ENCODE measurements at regions of chr20 and their contacts with region 1.

Region 1: GRCh38 chr20:41693136-41693979 is 75.2 kb upstream of the CHD6 start:
- DNase-seq: peak; percentile 69
- ATAC-seq: peak; percentile 89
- H3K4me3 Mint-ChIP-seq: peak overlapping the region; percentile 87
- H3K27ac Mint-ChIP-seq: peak overlapping the region; percentile 92
- H3K4me1 Mint-ChIP-seq: peaks cover 13% of the 10 kb centered on the region
- H3K27me3 Mint-ChIP-seq: no peaks in the 10 kb centered on the region

Region 2: DNA sequence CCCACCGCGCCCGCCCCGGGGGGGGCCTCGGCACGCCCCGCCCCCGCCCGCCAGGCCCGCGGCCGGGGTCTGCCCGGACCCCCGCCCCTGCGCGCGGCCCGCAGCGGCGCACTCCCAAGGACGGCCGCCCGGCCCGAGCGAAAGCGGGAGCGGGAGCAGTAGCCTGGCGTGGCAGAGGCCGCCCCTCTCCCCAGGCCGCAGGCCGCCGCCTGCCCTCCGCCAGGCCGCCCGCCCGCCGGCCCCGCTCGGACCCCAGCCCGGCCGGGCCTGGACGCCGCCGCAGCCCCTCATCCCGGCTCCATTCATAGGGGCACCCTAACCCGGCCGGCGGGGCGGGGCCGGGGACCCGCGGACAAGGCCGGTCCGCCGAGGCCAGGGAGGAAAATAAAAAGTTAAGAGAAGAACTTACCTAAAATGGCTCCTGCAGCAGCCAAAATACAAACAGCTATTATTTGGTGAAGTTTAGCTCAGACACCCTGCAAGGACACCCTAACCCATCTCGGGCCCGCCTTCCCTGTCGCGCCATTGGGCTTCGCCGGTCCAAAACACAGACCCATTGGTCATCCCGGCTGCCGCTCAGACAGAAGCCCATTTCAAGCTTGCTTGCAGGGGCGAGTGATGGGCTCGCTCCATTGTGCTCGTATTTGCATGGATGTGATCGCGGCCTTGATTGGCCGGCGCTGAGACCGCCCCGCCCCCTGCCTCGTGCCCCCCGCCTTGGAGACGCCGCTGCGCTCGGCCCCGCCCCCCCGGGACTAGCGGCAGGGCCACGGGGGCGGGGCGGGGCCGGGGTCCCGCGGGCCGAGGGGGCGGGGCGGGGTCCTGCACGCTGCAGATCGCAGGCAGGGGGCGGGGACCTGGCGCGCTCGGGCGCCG is 75.2 kb before region 1 on chr20 and contains the start of gene CHD6:
- POLR2A ChIA-PET with region 1: interaction called, 16 read pairs
- DNase-seq: peak; percentile 98
- ATAC-seq: peak; percentile 99
- H3K4me3 Mint-ChIP-seq: peak within 1 kb of the TSS; percentile 94
- H3K27ac Mint-ChIP-seq: peak within 1 kb of the TSS; percentile 89
- H3K4me1 Mint-ChIP-seq: peaks cover 27% of the 10 kb centered on the region
- H3K27me3 Mint-ChIP-seq: peaks cover 7% of the 10 kb centered on the region
- total RNA-seq, gene CHD6: 48.2 to 58.9 TPM

Region 3: DNA sequence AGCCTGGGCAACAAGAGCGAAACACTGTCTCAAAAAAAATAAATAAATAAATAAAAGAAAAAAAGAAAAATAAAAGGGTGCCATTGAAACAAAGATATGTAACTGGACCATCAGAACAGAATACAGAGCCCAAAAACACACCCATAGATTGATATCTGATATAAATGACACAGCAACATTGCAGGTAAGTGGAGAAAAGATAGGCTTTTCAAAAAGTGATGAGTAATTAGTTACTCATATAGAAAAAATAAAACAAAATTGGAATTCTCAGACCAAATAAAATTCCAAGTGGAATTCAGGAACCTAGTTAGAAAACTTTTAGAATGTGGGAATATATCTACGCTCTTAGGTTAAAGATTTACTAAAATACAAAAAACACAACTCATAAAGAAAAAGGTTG is 14.6 kb before region 1 on chr20:
- POLR2A ChIA-PET with region 1: no interaction called
- DNase-seq: no peak
- ATAC-seq: no peak
- H3K4me3 Mint-ChIP-seq: no peak overlapping the region
- H3K27ac Mint-ChIP-seq: no peak overlapping the region
- H3K4me1 Mint-ChIP-seq: no peaks in the 10 kb centered on the region
- H3K27me3 Mint-ChIP-seq: peaks cover 19% of the 10 kb centered on the region

Region 4: DNA sequence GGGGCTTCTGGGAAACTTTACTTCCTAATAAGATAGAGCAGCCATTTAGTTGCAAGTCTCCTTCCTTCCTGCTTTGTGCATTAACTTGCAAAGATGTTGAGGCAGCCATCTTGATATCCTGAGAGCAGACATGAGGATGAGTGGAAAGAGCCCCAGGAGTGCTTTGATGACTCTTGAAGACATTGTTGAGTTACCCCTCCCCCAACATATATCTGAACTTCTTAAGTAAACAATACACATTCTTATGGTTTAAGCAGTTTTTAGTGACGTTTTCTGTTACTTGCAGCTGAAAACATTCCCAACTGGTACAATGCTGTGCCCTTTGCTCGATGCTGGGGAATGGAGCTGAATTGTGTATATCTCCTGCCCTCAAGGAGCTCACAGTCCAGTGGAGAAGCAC is 28.9 kb after region 1 on chr20:
- POLR2A ChIA-PET with region 1: no interaction called
- DNase-seq: no peak
- ATAC-seq: no peak
- H3K4me3 Mint-ChIP-seq: no peak overlapping the region
- H3K27ac Mint-ChIP-seq: no peak overlapping the region
- H3K4me1 Mint-ChIP-seq: no peaks in the 10 kb centered on the region
- H3K27me3 Mint-ChIP-seq: no peaks in the 10 kb centered on the region

Measured in activated naive CD8-positive, alpha-beta T cell treated with anti-CD3 and anti-CD28 coated beads, Interleukin-2, amount 10 ng/mL, durations not matched to agents 7 days and 5 days (primary cell).